ENCODE measurements at regions of chr7 and their contacts with region 1.

Region 1: DNA sequence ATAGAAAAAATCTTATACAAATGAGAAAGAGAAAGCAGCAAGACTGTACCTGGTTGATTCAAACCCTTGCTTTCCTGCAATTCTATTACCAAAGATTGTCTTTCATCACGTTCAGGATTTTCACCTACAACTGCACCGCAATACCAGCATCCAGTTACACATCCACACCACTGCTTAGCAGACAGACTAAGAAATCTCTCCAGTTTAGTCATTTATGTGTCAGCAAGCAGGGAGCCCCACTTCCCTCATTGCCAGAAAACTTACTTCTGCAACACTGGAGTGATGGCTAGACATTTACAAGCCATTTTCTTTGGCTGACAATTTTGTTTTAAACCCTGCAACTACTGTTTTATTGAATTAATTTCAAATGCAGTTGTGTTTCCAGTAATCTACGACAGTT is 359.6 kb upstream of the MEOX2 start:
- DNase-seq: no peak
- ATAC-seq: no peak
- H3K4me3 ChIP-seq: no peak overlapping the region
- H3K27ac ChIP-seq: no peak overlapping the region
- H3K4me1 ChIP-seq: no peaks in the 10 kb centered on the region
- H3K27me3 ChIP-seq: no peaks in the 10 kb centered on the region

Region 2: DNA sequence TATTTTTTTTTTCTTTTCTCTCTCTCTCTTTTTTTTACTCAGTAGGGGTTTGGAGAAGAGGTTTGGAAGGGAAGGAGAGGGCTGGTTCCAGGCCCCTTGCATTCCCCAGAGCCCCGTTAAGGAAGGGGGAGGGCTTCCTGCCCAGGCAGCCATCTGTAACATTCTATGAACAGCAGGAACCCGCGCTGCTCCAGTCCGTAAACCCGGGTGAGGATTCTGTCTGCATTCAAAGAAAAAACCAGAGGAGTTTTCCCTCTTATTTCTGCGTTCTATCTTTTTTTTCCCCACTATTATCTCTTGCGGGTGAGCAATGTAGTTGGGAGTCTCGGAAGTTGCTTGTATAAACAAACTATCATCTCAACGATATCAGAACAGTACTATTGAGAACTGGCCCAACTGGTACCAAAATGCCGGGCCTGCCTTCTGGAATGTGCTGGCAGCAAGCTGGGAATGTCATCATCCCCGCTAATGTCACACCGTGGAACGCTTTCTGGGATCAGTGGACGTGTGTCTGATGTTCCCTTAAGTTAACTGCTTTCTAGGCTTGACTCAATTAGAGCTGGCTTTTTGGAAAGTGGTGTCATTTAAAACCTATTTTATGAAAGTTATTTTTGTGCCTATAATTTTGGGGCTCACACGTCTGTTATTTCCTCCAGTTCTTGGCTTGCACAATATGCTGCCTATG is 206.5 kb before region 1 on chr7:
- intact Hi-C with region 1: loop called in 1 of 4 experiments (anchors 10 kb)
- DNase-seq: peak; percentile 73 to 91 (median 86)
- ATAC-seq: peak; percentile 97 to 98
- H3K4me3 ChIP-seq: peak overlapping the region; percentile 57
- H3K27ac ChIP-seq: peak overlapping the region; percentile 88
- H3K4me1 ChIP-seq: no peaks in the 10 kb centered on the region
- H3K27me3 ChIP-seq: no peaks in the 10 kb centered on the region